Testis (tissue), 5 donors: ENCODE measurements at regions of chr4 and their contacts with region 1.

Region 1: GRCh38 chr4:53365486-53366300 is at the start of gene SCFD2:
- DNase-seq: peak; percentile 100
- H3K4me3 ChIP-seq: peak within 1 kb of the TSS; percentile 70 to 85
- H3K27ac ChIP-seq: peak within 1 kb of the TSS in 1 of 2 donors; percentile 60
- H3K4me1 ChIP-seq: peaks cover 4% of the 10 kb centered on the region
- H3K27me3 ChIP-seq: no peaks in the 10 kb centered on the region
- CTCF ChIP-seq: peak in 1 of 3 experiments; percentile 10
- POLR2A ChIP-seq: no peak
- total RNA-seq, gene SCFD2: 21.3 to 24.5 TPM

Region 2: DNA sequence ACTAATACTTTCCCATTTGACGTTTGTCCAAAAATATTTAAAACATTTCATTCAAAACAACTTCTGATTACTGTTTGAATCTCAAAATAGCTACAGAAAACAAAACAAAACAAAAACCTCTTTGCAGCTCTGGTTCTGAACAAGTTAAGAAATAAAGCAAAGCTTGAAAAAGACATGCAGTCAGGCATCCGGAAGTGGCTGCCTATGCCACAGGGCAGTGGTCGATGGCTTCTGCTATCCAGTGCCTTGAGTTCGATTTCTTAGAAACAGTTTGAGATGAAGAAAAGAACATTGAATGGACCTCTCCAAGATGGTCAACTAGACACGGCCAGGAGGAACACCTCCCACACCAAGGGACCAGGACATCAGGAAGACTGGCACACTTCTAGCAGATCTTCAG is 125.1 kb before region 1 on chr4:
- intact Hi-C with region 1: no loop called
- DNase-seq: no peak
- H3K4me3 ChIP-seq: no peak overlapping the region
- H3K27ac ChIP-seq: no peak overlapping the region
- H3K4me1 ChIP-seq: no peaks in the 10 kb centered on the region
- H3K27me3 ChIP-seq: no peaks in the 10 kb centered on the region
- CTCF ChIP-seq: no peak
- POLR2A ChIP-seq: no peak

Region 3: DNA sequence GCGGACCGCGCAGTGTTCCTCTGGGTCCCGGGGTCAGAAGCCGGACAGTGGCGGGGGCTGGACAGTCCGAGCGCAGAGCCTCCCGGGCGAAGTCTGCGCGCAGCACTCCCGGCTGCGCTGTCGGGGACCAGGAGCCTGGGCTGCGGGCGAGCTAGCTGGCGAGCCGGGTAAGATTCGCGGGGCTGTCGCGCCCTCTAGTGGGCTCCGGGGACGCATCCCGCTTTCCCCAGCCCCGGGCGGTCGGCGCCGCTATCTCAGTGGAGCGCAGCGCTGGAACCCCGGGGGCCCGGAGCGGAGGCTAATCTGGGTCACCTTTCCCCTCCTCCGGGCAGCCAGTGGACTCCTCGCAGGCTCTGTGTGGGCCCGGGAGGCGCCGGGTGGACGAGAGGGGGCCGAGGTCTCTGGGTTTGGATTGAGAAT is 867.6 kb after region 1 on chr4:
- intact Hi-C with region 1: loop called (anchors 5 kb)
- DNase-seq: peak; percentile 88
- H3K4me3 ChIP-seq: peak overlapping the region; percentile 77 to 81
- H3K27ac ChIP-seq: peak overlapping the region; percentile 84 to 88
- H3K4me1 ChIP-seq: peaks cover 15% of the 10 kb centered on the region
- H3K27me3 ChIP-seq: no peaks in the 10 kb centered on the region
- CTCF ChIP-seq: peak; percentile 65 to 73 (median 70)
- POLR2A ChIP-seq: no peak